Lower leg skin (tissue), 4 donors: ENCODE measurements at regions of chr11 and their contacts with region 1.

Region 1: GRCh38 chr11:45110562-45110961 is 35.9 kb upstream of the PRDM11 start:
- DNase-seq: no peak
- H3K4me3 ChIP-seq: no peak overlapping the region
- CTCF ChIP-seq: peak in 1 of 3 donors; percentile 58
- POLR2A ChIP-seq: no peak

Region 2: GRCh38 chr11:45332276-45332934 is 221.8 kb after region 1 on chr11:
- intact Hi-C with region 1: loop called (anchors 2 kb)
- DNase-seq: no peak
- H3K4me3 ChIP-seq: no peak overlapping the region
- CTCF ChIP-seq: no peak
- POLR2A ChIP-seq: no peak